ENCODE measurements at regions of chr19 and their contacts with region 1.

Region 1: DNA sequence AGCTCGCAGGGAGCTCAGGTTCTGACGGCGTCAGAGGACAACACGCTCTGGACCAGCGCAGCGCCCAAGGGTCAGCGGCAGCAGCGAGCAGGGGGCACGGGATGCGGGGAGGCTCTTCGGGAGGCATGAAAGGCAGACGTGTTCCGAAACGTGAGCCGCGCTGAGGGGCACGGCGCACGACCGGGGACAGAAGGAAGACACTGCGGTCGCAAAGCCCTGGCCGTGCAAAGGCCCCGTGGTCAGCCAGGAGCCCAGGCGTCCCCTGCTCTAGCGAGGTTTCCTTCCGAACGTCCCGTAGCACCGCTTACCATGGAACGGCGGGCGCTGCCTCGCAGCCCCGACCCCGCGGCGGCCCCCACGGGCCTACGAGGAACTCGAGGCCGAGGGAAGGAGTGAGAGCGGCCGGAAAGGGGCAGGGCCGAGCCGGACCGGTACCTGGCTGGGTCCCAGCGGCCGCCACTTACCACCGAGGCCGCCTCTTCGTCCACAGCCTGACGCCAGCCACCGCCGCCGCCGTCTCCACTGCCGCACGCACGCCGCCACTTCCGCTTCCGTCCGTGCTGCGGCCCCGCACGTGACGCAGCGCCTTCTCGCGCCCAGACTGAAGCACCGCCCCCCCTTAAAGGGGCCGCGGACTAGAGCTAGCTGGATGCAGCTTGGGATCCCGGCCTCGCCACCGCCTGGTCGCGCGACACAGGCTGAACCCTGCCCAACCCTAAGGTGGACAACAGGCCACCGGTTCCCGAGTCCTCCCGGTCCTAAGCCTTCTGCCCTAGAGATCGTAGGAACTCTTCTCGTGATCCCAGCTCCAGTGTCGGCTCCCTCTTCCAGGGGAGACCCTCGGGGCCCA is 9.4 kb downstream of the ABHD17A start:
- DNase-seq: peak; percentile 93
- H3K4me3 Mint-ChIP-seq: peak overlapping the region; percentile 99
- H3K27ac Mint-ChIP-seq: peak overlapping the region; percentile 97
- H3K4me1 Mint-ChIP-seq: peaks cover 15% of the 10 kb centered on the region
- H3K27me3 Mint-ChIP-seq: no peaks in the 10 kb centered on the region

Region 2: DNA sequence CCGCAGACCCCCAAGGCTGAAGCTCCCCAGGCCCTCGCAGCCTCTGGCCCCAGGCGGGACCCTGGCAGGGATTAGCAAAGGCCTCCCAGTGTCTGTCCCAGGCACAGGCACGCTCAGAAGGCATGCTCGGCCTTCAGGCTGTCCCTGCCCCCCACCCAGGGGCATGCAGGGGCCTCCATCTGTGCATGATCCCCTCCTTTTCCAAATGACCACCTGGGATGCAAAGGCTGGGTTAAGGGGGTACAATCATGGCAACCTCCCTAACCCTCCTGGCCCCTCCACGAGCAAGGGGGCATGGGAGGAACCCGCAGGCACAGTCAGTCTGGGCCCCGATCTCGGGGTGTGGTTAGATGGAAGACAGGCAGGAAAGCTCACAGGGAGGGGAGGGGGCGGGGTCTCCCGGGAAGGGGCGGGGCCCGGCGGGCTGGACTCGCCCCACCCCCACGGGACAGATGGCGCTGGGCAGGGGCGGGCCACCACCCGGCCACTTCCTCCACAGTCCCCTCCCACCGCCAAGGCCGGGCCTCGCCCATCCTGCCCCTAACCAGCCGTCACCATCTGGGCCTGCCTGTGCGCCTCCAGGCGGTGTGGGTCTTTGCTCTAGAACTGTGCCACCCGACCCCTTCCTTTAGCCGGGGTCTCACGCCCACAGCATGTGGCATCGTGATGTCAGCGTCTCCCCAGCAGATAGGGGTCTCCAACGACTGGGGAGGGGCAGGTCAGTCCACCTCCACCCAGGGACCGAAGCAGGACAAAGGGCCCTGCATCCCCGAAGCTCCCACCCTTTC is 20.6 kb before region 1 on chr19:
- CTCF ChIA-PET with region 1: interaction called, 13 read pairs
- POLR2A ChIA-PET with region 1: interaction called, 8 read pairs
- intact Hi-C with region 1: no loop called
- DNase-seq: peak; percentile 95
- H3K4me3 Mint-ChIP-seq: peak overlapping the region; percentile 80
- H3K27ac Mint-ChIP-seq: peak overlapping the region; percentile 91
- H3K4me1 Mint-ChIP-seq: peaks cover 49% of the 10 kb centered on the region
- H3K27me3 Mint-ChIP-seq: no peaks in the 10 kb centered on the region

Region 3: DNA sequence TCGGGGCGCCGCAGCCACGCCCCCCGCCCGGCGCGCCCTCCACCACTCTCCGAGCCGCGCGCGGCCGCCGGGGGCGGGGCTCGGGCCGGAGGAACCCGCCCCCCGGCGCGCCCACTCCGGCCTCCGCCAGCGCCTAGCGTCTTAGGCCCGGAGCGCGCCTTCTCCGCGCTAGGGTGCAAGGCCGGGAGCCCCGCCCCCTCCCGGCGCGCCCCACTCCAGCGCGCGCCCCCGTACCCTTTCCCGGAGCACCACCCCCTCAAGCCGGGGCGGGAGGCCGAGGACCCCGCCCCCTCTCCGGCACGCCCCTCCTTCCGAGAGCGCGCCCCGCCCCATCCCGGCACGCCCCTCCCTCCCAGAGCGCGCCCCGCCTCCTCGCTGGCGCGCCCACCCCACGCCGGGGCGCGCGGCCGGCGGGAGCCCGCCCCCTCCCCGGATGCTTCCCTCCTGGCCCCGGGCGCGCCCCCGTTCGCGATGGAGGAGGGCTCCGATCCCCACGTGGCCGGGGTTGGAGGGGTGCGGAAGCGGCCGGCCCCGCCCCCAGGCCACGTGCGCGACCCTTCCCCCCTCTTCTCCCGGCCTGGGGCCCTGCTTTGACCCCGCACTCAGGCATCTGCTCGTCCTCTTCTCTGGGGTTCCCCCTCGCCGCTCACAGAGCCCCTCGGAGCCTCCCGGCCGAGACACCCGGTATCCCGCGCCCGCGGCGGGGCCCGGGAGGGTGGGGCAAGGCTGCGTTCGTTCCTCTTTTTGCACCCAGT is 12.0 kb before region 1 on chr19:
- CTCF ChIA-PET with region 1: interaction called, 18 read pairs
- POLR2A ChIA-PET with region 1: interaction called, 19 read pairs
- intact Hi-C with region 1: loop called (anchors 1 kb)
- DNase-seq: peak; percentile 94
- H3K4me3 Mint-ChIP-seq: peak overlapping the region; percentile 75
- H3K27ac Mint-ChIP-seq: peak overlapping the region; percentile 69
- H3K4me1 Mint-ChIP-seq: peaks cover 33% of the 10 kb centered on the region
- H3K27me3 Mint-ChIP-seq: no peaks in the 10 kb centered on the region

Region 4: GRCh38 chr19:2016041-2016807 is 140.4 kb after region 1 on chr19:
- CTCF ChIA-PET with region 1: no interaction called
- POLR2A ChIA-PET with region 1: no interaction called
- intact Hi-C with region 1: no loop called
- DNase-seq: peak; percentile 82
- H3K4me3 Mint-ChIP-seq: peak overlapping the region; percentile 60
- H3K27ac Mint-ChIP-seq: peak overlapping the region; percentile 28
- H3K4me1 Mint-ChIP-seq: peaks cover 15% of the 10 kb centered on the region
- H3K27me3 Mint-ChIP-seq: no peaks in the 10 kb centered on the region

Region 5: GRCh38 chr19:2887391-2887914 is 1011.6 kb after region 1 on chr19:
- CTCF ChIA-PET with region 1: no interaction called
- POLR2A ChIA-PET with region 1: no interaction called
- intact Hi-C with region 1: no loop called
- DNase-seq: no peak
- H3K4me3 Mint-ChIP-seq: no peak overlapping the region
- H3K27ac Mint-ChIP-seq: no peak overlapping the region
- H3K4me1 Mint-ChIP-seq: peaks cover 9% of the 10 kb centered on the region
- H3K27me3 Mint-ChIP-seq: no peaks in the 10 kb centered on the region

Measured in activated CD4-positive, alpha-beta memory T cell treated with anti-CD3 and anti-CD28 coated beads for 36 hours (primary cell).